Dendritic cell treated with granulocyte-macrophage colony-stimulating factor and Interleukin-4, amounts not matched to agents 40 ng/mL and 50 ng/mL, for 4 days (primary cell): ENCODE measurements at regions of chr1 and their contacts with region 1.

Region 1: DNA sequence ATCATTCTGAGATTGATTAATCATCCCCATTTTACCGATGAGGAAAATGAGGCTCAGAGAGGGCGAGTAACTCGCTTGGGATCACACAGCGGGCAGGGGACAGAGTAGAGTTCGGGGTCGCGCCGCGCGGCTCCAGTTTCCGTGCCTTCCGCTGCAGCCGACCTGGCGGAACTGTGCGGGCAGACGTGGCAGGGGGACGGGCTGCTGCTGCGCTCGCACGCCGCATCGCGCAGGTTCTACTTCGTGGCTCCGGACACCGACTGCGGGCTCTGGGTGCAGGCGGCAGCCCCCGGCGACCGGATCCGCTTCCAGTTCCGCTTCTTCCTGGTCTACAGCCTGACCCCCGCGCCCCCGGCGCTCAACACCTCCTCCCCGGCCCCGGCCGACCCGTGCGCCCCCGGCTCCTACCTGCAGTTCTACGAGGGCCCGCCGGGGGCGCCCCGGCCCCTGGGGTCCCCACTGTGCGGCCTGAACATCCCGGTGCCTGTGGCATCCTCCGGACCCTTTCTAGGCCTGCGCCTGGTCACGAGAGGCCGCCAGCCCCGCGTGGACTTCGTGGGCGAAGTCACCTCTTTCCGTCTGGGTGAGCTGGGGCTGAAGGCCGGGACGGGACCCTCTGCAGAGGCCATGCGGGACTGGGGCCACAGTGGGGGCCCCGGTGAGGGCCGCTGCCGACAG is 2.3 kb downstream of the LDLRAD2 start:
- H3K4me3 Mint-ChIP-seq: peak overlapping the region; percentile 59
- H3K27ac Mint-ChIP-seq: no peak overlapping the region
- H3K4me1 Mint-ChIP-seq: peaks cover 42% of the 10 kb centered on the region
- H3K27me3 Mint-ChIP-seq: peaks cover 15% of the 10 kb centered on the region

Region 2: GRCh38 chr1:21782868-21783678 is 31.3 kb before region 1 on chr1 and contains the start of gene USP48:
- intact Hi-C with region 1: loop called (anchors 2 kb)
- H3K4me3 Mint-ChIP-seq: peak within 1 kb of the TSS; percentile 98
- H3K27ac Mint-ChIP-seq: peak within 1 kb of the TSS; percentile 100
- H3K4me1 Mint-ChIP-seq: peaks cover 24% of the 10 kb centered on the region
- H3K27me3 Mint-ChIP-seq: no peaks in the 10 kb centered on the region

Region 3: GRCh38 chr1:21839337-21840037 is 25.1 kb after region 1 on chr1:
- intact Hi-C with region 1: loop called (anchors 2 kb)
- H3K4me3 Mint-ChIP-seq: no peak overlapping the region
- H3K27ac Mint-ChIP-seq: no peak overlapping the region
- H3K4me1 Mint-ChIP-seq: no peaks in the 10 kb centered on the region
- H3K27me3 Mint-ChIP-seq: no peaks in the 10 kb centered on the region